Spleen (tissue), 13 donors: ENCODE measurements at regions of chr20 and their contacts with region 1.

Region 1: GRCh38 chr20:17504898-17505635 is 26.1 kb downstream of the BFSP1 start:
- DNase-seq: peak; percentile 93
- H3K4me3 ChIP-seq: peak overlapping the region; percentile 50 to 75 (median 54)
- H3K27ac ChIP-seq: peak overlapping the region in 7 of 8 donors; percentile 40 to 72 (median 55)
- H3K4me1 ChIP-seq: peaks cover 0 to 35% (median 16%) of the 10 kb centered on the region in 6 donors
- H3K27me3 ChIP-seq: no peaks in the 10 kb centered on the region
- CTCF ChIP-seq: peak; percentile 37 to 85 (median 71)
- POLR2A ChIP-seq: no peak

Region 2: GRCh38 chr20:17044901-17045300 is 460.2 kb before region 1 on chr20:
- intact Hi-C with region 1: no loop called
- DNase-seq: no peak
- H3K4me3 ChIP-seq: no peak overlapping the region
- H3K27ac ChIP-seq: no peak overlapping the region
- H3K4me1 ChIP-seq: no peaks in the 10 kb centered on the region
- H3K27me3 ChIP-seq: no peaks in the 10 kb centered on the region
- CTCF ChIP-seq: no peak
- POLR2A ChIP-seq: no peak

Region 3: GRCh38 chr20:17898548-17898994 is 393.5 kb after region 1 on chr20:
- intact Hi-C with region 1: loop called (anchors 10 kb)
- DNase-seq: peak; percentile 88
- H3K4me3 ChIP-seq: no peak overlapping the region
- H3K27ac ChIP-seq: no peak overlapping the region
- H3K4me1 ChIP-seq: peaks cover 17 to 88% (median 30%) of the 10 kb centered on the region in 6 donors
- H3K27me3 ChIP-seq: peaks cover 0 to 9% (median 0%) of the 10 kb centered on the region in 7 donors
- CTCF ChIP-seq: peak; percentile 79 to 96 (median 92)
- POLR2A ChIP-seq: no peak

Region 4: GRCh38 chr20:18137412-18138265 is 632.6 kb after region 1 on chr20 and contains the starts of genes KAT14 and PET117:
- intact Hi-C with region 1: loop called (anchors 10 kb)
- DNase-seq: peak; percentile 98
- H3K4me3 ChIP-seq: peak within 1 kb of the TSS; percentile 91 to 98 (median 96)
- H3K27ac ChIP-seq: peak within 1 kb of the TSS; percentile 92 to 98 (median 96)
- H3K4me1 ChIP-seq: peaks cover 14 to 44% (median 38%) of the 10 kb centered on the region in 6 donors
- H3K27me3 ChIP-seq: no peaks in the 10 kb centered on the region
- CTCF ChIP-seq: peak in 1 of 11 experiments; percentile 18
- POLR2A ChIP-seq: peak in 2 of 3 donors; percentile 42 to 67
- total RNA-seq, gene KAT14: 11.2 to 18.2 (median 13.8) TPM
- total RNA-seq, gene PET117: 9.4 to 15.5 (median 12.0) TPM

Region 5: GRCh38 chr20:18276821-18277220 is 771.8 kb after region 1 on chr20:
- intact Hi-C with region 1: loop called (anchors 10 kb)
- DNase-seq: no peak
- H3K4me3 ChIP-seq: no peak overlapping the region
- H3K27ac ChIP-seq: no peak overlapping the region
- H3K4me1 ChIP-seq: peaks cover 0 to 5% (median 2%) of the 10 kb centered on the region in 6 donors
- H3K27me3 ChIP-seq: peaks cover 0 to 78% (median 20%) of the 10 kb centered on the region in 7 donors
- CTCF ChIP-seq: peak in 10 of 11 experiments; percentile 18 to 73 (median 60)
- POLR2A ChIP-seq: no peak